ENCODE measurements at regions of chr4 and their contacts with region 1.

Region 1: DNA sequence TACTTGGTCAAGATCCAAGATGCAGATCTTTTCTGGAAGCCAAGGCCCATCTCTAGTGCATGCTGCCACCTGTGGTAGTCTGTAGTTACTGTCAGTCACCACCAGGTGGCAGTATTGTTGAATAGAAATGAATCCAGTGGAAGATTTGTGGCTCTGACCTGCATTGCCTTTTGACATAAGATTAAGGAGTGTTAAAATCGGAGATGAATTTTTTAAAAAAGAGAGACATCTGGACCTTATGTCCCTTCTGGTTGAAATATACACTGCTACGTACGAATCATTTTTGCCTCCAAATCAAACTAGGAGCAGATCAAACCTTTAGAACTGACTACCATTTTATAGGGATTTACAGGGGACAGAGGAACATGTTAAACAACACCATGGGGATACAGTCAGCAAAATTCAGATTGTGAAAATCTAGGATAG is 46.9 kb upstream of the RHOH start:
- DNase-seq: peak; percentile 67
- ATAC-seq: peak; percentile 75
- H3K4me3 ChIP-seq: no peak overlapping the region
- H3K27ac ChIP-seq: no peak overlapping the region
- H3K4me1 ChIP-seq: no peaks in the 10 kb centered on the region
- H3K27me3 ChIP-seq: no peaks in the 10 kb centered on the region
- CTCF ChIP-seq: peak; percentile 74
- POLR2A ChIP-seq: no peak
- RAD21 ChIP-seq: peak; percentile 79

Region 2: GRCh38 chr4:40309250-40309774 is 159.3 kb after region 1 on chr4:
- CTCF ChIA-PET with region 1: interaction called, 3 read pairs
- POLR2A ChIA-PET with region 1: no interaction called
- dilution Hi-C with region 1: no loop called
- in situ Hi-C with region 1: no loop called
- intact Hi-C with region 1: loop called (anchors 1 kb)
- DNase-seq: peak; percentile 77
- ATAC-seq: peak; percentile 99
- H3K4me3 ChIP-seq: no peak overlapping the region
- H3K27ac ChIP-seq: no peak overlapping the region
- H3K4me1 ChIP-seq: no peaks in the 10 kb centered on the region
- H3K27me3 ChIP-seq: peaks cover 10% of the 10 kb centered on the region
- CTCF ChIP-seq: peak; percentile 88
- POLR2A ChIP-seq: no peak
- RAD21 ChIP-seq: peak; percentile 83

Region 3: DNA sequence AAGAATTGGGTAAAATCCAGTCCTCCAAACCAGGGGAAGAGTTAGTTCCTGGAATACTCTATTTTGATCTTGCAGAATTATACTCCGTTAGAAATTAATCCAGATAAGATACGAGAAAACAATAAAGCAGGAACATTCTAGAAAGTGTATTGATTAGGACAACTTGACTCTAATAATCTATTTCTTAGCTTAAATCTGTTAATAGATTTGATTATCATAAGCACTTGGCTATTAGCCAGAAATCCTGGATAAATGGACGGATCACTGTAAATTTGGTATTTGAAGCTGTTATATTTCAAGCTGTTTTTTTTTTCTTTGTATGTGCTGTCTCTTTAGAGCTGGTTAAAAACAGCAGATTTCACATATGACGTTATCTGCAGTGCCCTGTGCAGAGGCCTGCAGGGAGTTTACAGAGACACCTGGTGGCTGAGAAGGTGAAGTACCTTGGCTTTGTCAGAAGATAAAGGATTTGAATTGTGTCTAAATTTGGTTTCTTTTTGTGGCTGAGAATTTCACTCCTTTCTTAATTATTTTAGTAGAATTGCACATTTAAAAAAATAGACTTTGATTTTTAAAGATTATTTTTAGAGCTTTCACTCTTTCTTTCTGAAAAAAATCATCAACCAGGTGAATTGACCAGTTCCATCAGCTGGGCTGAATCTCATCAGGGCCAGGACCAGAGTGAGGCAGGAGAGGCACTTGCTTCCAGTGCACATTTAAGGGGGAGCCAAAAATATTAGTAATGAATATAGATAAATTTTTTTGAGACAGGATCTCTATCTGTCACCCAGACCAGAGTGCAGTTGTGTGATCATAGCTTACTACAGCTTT is 175.4 kb after region 1 on chr4:
- CTCF ChIA-PET with region 1: no interaction called
- POLR2A ChIA-PET with region 1: no interaction called
- dilution Hi-C with region 1: no loop called
- in situ Hi-C with region 1: no loop called
- intact Hi-C with region 1: no loop called
- DNase-seq: peak; percentile 72
- ATAC-seq: peak; percentile 77
- H3K4me3 ChIP-seq: no peak overlapping the region
- H3K27ac ChIP-seq: no peak overlapping the region
- H3K4me1 ChIP-seq: peaks cover 4% of the 10 kb centered on the region; the same call in 1 of the 2 replicates
- H3K27me3 ChIP-seq: peaks cover 4% of the 10 kb centered on the region; the same call in 1 of the 2 replicates
- CTCF ChIP-seq: peak; percentile 76
- POLR2A ChIP-seq: no peak
- RAD21 ChIP-seq: peak; percentile 77

Region 4: DNA sequence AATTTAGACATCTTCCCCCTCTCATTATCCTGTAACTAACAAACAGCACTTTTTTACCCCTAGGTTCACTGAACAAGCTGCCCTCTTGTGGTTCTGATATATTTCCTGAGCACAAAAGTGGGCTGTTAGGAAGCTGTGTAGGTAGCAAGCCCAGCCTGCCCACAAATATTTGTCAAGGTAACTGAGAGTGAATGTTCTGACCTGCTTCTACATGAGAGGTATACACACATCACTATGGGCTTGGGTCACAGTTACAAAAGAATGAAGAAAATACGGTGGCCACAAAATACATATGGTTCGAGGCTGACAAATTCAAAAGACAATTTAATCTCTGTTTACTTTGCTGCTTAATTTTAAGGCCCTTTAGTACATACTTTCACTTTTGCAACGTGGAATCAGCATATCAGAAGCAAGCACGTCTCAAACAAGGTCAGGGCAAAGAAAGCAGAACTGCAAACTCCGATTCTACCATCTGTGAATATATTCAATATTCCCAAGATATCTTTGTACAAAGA is 401.0 kb after region 1 on chr4:
- CTCF ChIA-PET with region 1: no interaction called
- POLR2A ChIA-PET with region 1: no interaction called
- dilution Hi-C with region 1: no loop called
- in situ Hi-C with region 1: no loop called
- intact Hi-C with region 1: loop called (anchors 5 kb)
- DNase-seq: peak; percentile 52
- ATAC-seq: peak; percentile 68
- H3K4me3 ChIP-seq: peak overlapping the region; percentile 28
- H3K27ac ChIP-seq: no peak overlapping the region
- H3K4me1 ChIP-seq: 0 out of 2 replicates have a peak, but pooled peaks cover 5% of the 10 kb centered on the region
- H3K27me3 ChIP-seq: no peaks in the 10 kb centered on the region
- CTCF ChIP-seq: peak; percentile 36
- POLR2A ChIP-seq: no peak
- RAD21 ChIP-seq: no peak; the same call in 1 of the 2 replicates

Region 5: GRCh38 chr4:40731792-40732245 is 581.8 kb after region 1 on chr4:
- CTCF ChIA-PET with region 1: no interaction called
- POLR2A ChIA-PET with region 1: no interaction called
- dilution Hi-C with region 1: no loop called
- in situ Hi-C with region 1: no loop called
- intact Hi-C with region 1: loop called (anchors 5 kb)
- DNase-seq: no peak
- ATAC-seq: no peak
- H3K4me3 ChIP-seq: no peak overlapping the region
- H3K27ac ChIP-seq: no peak overlapping the region
- H3K4me1 ChIP-seq: no peaks in the 10 kb centered on the region
- H3K27me3 ChIP-seq: peaks cover 10% of the 10 kb centered on the region
- CTCF ChIP-seq: no peak
- POLR2A ChIP-seq: no peak
- RAD21 ChIP-seq: no peak

Measured in IMR-90 (cell line).